Activated T-helper 1 cell treated with anti-CD3 and anti-CD28 coated beads, Interleukin-12 subunit alpha, Interleukin-12 subunit beta, Interleukin-2, Interleukin-4 antibody, amounts not matched to agents 30 ng/mL and 10 ng/mL and 1 ng/mL, durations not matched to agents 14 hours and 24 hours and 36 hours (primary cell): ENCODE measurements at regions of chr6 and their contacts with region 1.

Region 1: GRCh38 chr6:145887969-145888368 is 73.4 kb upstream of the FBXO30 start:
- DNase-seq: no peak
- H3K4me3 Mint-ChIP-seq: no peak overlapping the region
- H3K27ac Mint-ChIP-seq: no peak overlapping the region
- H3K4me1 Mint-ChIP-seq: no peaks in the 10 kb centered on the region
- H3K27me3 Mint-ChIP-seq: no peaks in the 10 kb centered on the region

Region 2: DNA sequence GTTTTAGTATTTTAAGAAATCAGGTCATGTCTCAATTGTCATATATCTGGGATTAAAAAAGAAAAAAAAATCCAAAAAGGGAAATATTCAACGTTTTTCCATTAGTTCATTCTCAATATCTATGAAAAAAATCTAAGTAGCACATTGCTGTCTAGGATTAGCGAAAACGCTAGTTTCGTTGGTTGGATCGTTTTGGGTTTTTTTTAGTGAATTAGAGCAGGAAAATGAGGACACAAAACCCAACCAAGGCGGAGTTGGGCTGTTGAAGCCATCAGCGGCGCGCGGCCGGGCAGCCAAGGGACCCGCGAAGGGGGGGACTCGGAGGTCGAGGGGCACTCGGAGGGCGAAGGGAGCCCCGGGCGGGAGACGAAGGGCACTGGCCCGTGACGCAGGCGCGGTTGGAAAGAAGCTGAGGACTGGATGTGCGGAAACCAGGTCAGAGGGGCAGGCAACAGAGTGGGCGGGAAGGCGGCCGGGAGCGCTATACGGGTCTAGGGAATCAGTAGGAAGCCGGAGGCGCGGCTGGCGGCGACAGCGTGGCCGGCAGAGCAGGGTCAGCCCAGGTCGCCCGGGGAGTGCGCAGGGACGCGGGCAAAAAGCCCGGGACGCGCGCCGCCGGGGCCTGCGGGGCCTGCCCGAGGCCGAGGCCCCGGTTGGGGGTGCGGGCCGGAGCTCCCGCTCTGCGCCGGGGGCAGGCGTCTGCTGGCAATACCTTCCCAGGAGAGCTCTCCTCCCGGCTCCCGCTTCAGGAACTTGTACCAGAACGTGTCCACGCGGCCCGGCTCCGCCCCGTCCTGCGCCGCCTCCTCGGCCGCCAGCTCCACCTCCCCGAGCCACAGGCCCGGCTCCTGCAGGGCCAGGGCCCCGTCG is 153.2 kb before region 1 on chr6:
- intact Hi-C with region 1: loop called (anchors 5 kb)
- DNase-seq: peak; percentile 52
- H3K4me3 Mint-ChIP-seq: peak overlapping the region; percentile 94
- H3K27ac Mint-ChIP-seq: peak overlapping the region; percentile 96
- H3K4me1 Mint-ChIP-seq: peaks cover 26% of the 10 kb centered on the region
- H3K27me3 Mint-ChIP-seq: no peaks in the 10 kb centered on the region

Region 3: GRCh38 chr6:145823328-145823944 is 64.5 kb before region 1 on chr6:
- intact Hi-C with region 1: no loop called
- DNase-seq: no peak
- H3K4me3 Mint-ChIP-seq: no peak overlapping the region
- H3K27ac Mint-ChIP-seq: peak overlapping the region; percentile 59
- H3K4me1 Mint-ChIP-seq: peaks cover 46% of the 10 kb centered on the region
- H3K27me3 Mint-ChIP-seq: no peaks in the 10 kb centered on the region